ENCODE measurements at regions of chr3 and their contacts with region 1.

Region 1: DNA sequence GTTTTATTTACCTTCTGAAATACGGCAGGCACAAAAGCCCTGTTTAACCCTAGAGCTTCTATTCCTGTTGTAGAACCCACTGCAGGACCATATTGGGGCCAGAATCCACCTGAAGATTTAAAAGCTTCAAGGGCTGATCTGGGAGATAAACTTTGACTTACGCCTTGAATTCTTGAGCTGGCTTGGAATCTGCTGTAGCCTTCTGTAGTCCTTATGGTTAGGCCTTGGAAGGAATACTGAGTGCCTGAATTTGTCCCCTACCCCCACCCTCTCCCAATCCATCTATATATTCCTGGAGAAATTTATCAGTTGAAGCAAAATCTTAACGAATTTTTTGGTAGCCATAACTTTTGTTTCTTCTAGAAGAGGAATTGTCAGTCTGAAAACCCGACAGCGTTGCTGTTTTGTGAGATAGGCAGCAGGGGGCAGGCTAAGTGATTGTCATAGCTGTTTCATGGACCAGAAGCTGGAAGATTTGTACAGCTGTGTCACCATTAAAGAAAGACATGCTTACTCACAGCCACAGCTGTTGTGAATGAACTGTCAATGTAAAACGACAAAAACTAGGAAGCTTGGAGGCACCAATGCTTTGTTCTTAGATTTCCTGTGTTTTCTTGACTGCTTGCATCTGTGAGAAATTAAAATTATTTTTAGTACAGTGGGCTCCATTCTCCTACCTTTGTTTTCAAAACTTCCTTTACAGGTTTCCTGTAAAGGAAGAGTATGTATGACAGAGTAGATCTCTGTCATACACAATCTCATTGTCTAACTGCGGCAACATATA is 12.8 kb downstream of the LXN start:
- DNase-seq: peak; percentile 71
- ATAC-seq: peak; percentile 88
- H3K4me3 Mint-ChIP-seq: no peak overlapping the region
- H3K27ac Mint-ChIP-seq: peak overlapping the region; percentile 32
- H3K4me1 Mint-ChIP-seq: peaks cover 7% of the 10 kb centered on the region
- H3K27me3 Mint-ChIP-seq: no peaks in the 10 kb centered on the region

Region 2: DNA sequence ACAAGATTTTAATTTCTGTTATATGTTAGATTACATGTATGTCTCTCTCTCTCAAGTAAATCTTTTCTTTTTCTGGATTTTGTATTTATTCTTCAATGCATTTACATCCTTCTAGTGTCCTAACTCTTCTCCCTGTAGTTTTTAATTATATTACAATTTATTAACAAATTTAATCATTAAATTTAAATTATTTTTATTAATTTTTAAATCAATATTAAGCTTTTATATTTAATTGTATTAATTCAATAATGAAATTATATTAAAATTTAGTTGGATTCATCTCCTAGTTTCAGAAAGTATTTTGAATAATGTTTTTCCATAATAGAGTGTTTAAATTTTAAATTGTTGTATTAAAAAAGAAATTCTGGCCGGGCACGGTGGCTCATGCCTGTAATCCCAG is 58.9 kb before region 1 on chr3:
- CTCF ChIA-PET with region 1: no interaction called
- DNase-seq: no peak
- ATAC-seq: no peak
- H3K4me3 Mint-ChIP-seq: no peak overlapping the region
- H3K27ac Mint-ChIP-seq: no peak overlapping the region
- H3K4me1 Mint-ChIP-seq: peaks cover 6% of the 10 kb centered on the region
- H3K27me3 Mint-ChIP-seq: no peaks in the 10 kb centered on the region

Region 3: DNA sequence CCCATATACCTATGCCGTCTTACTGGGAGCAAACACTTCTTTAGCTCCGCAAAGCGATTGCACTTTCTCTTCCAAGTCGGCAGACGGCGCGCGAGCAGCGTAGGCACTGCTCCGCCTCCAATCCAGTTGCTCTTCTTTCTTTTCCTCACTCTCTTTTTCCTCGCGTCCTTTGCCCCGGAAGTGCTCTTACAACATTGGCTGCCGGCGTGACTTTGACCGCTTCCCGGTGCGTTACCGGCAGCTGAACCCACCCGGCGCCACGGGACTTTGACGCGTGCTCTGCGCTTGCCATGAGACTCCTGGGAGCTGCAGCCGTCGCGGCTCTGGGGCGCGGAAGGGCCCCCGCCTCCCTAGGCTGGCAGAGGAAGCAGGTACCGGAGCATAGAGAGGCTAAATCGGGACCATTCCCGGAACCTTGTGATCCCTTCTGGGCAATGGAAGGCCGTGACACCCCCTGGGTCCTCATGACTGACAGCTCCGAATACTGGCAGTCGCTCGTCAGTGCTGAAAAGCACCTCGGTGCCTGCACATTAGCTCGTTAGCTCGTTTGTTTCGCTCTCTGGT is 15.2 kb before region 1 on chr3 and contains the start of gene GFM1:
- CTCF ChIA-PET with region 1: interaction called, 43 read pairs
- DNase-seq: peak; percentile 92
- ATAC-seq: peak; percentile 95
- H3K4me3 Mint-ChIP-seq: peak within 1 kb of the TSS; percentile 97
- H3K27ac Mint-ChIP-seq: peak within 1 kb of the TSS; percentile 91
- H3K4me1 Mint-ChIP-seq: peaks cover 49% of the 10 kb centered on the region
- H3K27me3 Mint-ChIP-seq: no peaks in the 10 kb centered on the region
- total RNA-seq, gene GFM1: 39.4 to 50.9 TPM

Region 4: DNA sequence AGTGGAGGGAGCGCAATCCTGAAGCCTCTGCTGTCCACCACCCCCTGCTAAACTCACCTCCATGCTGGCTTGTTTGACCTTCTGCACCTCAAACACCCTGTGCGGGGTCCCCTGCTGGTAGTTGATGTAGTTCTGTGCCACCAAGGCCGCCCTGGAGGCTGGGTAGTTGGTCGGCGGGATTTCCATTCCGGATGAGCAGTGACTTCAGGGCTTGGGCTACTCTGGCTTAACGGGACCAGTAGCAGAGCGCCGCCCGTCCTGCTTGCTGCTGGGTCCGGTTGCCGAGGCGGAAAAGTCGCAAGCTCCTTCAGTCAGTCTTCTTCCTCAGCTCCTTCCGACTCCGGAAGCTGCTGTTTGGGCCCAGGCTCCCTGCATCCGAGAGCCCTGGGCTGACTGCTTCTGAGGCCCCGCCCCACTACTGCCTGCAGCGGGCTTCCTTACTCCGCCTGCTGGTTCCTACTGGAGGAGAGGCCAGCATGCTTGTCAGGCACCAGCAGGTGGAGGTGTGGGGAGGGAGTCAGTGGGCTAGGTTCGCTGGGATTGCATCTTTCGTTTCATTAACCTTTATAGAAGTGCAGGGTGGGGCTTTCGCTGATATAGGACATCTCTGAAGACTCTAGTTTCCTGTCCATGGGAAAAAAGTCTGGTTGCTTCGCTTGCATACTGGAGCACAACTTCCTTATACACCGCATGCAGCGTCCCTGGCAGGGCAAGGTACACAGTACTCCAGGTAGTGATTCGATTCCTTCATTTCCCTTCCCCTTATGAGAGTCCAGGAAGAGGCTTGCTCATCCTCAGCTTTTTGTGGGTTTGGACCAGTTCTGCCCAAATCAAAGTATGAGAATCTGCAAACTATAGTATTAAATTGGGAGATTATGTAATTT is 12.9 kb after region 1 on chr3 and contains the start of gene LXN:
- CTCF ChIA-PET with region 1: interaction called, 37 read pairs
- DNase-seq: peak; percentile 90
- ATAC-seq: peak; percentile 100
- H3K4me3 Mint-ChIP-seq: peak within 1 kb of the TSS; percentile 95
- H3K27ac Mint-ChIP-seq: peak within 1 kb of the TSS; percentile 93
- H3K4me1 Mint-ChIP-seq: peaks cover 17% of the 10 kb centered on the region
- H3K27me3 Mint-ChIP-seq: no peaks in the 10 kb centered on the region
- total RNA-seq, gene LXN: 6.7 to 7.5 TPM

Region 5: DNA sequence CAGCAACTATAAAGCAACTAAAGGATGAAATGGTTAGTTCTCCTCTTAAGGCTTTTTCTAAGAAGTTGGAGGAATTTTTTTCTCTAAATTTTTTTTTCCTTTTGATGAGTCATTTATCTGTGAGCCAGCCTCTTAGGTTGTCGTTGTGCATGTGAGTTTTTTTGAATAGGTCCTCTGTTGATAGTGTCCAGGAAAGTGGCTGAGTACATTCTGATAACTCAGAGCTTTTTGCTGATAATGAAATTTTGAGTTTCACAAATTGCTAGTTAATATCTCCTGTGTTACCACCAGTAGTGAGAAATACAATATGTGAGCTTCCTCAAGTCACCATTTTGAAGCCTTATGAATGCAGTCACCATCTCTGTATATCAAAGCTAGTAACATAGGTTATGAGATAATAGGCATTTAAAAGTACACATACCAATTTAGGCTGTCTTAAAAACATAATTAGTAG is 19.9 kb after region 1 on chr3:
- CTCF ChIA-PET with region 1: interaction called, 11 read pairs
- DNase-seq: no peak
- ATAC-seq: no peak
- H3K4me3 Mint-ChIP-seq: no peak overlapping the region
- H3K27ac Mint-ChIP-seq: no peak overlapping the region
- H3K4me1 Mint-ChIP-seq: no peaks in the 10 kb centered on the region
- H3K27me3 Mint-ChIP-seq: no peaks in the 10 kb centered on the region

Region 6: GRCh38 chr3:158727206-158728060 is 67.8 kb after region 1 on chr3:
- CTCF ChIA-PET with region 1: interaction called, 12 read pairs
- DNase-seq: peak; percentile 65
- ATAC-seq: peak; percentile 62
- H3K4me3 Mint-ChIP-seq: no peak overlapping the region
- H3K27ac Mint-ChIP-seq: no peak overlapping the region
- H3K4me1 Mint-ChIP-seq: peaks cover 20% of the 10 kb centered on the region
- H3K27me3 Mint-ChIP-seq: peaks cover 2% of the 10 kb centered on the region

Region 7: GRCh38 chr3:158790901-158791589 is 131.4 kb after region 1 on chr3:
- CTCF ChIA-PET with region 1: interaction called, 46 read pairs
- DNase-seq: peak; percentile 50
- ATAC-seq: peak; percentile 72
- H3K4me3 Mint-ChIP-seq: peak overlapping the region; percentile 47
- H3K27ac Mint-ChIP-seq: no peak overlapping the region
- H3K4me1 Mint-ChIP-seq: peaks cover 9% of the 10 kb centered on the region
- H3K27me3 Mint-ChIP-seq: peaks cover 5% of the 10 kb centered on the region

Region 8: GRCh38 chr3:158801696-158802408 is 142.2 kb after region 1 on chr3 and contains the start of gene MFSD1:
- CTCF ChIA-PET with region 1: interaction called, 17 read pairs
- DNase-seq: peak; percentile 96
- ATAC-seq: peak; percentile 95
- H3K4me3 Mint-ChIP-seq: peak within 1 kb of the TSS; percentile 84
- H3K27ac Mint-ChIP-seq: peak within 1 kb of the TSS; percentile 83
- H3K4me1 Mint-ChIP-seq: peaks cover 22% of the 10 kb centered on the region
- H3K27me3 Mint-ChIP-seq: peaks cover 4% of the 10 kb centered on the region
- total RNA-seq, gene MFSD1: 19.4 to 20.6 TPM

Measured in activated CD8-positive, alpha-beta memory T cell treated with anti-CD3 and anti-CD28 coated beads, Interleukin-2, amount 10 ng/mL, durations not matched to agents 7 days and 5 days (primary cell).